Caco-2 (cell line): ENCODE measurements at regions of chr1 and their contacts with region 1.

Region 1: DNA sequence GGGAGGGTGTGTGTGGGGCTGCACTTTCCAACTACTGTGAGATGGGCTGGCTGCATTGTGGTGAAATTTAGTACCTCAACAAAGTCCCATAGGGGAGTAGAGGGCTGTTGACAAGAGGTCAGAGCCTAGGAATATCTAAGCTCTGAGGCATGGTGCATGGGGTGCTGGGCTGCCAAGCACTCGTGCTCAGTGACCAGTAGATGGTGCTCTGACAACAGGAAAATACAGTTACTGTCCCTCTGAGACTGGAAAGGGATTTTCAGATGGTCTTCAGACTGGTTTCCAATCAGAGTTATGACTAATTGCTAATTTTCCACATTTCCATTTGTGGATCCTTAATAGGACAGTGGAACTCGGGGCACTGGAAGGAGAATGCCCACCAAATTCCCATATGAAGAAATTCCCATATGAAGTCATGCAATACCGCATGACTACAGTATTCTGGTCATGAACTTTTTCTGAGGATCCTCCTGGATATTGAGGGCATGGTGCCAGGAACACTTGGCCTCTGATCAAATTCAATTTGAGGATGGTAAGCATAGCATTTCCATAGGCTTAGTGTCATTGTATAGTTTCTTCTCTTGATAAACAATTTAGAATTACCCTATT is 4.1 kb upstream of the CACNA1E start:
- DNase-seq: peak; percentile 52 to 66
- H3K4me3 ChIP-seq: no peak overlapping the region
- H3K4me3 Mint-ChIP-seq: no peak overlapping the region
- H3K27ac Mint-ChIP-seq: no peak overlapping the region
- H3K4me1 ChIP-seq: no peaks in the 10 kb centered on the region
- H3K4me1 Mint-ChIP-seq: peaks cover 7% of the 10 kb centered on the region
- H3K27me3 ChIP-seq: no peaks in the 10 kb centered on the region
- H3K27me3 Mint-ChIP-seq: peaks cover 3% of the 10 kb centered on the region
- CTCF ChIP-seq: peak; percentile 74 to 88

Region 2: GRCh38 chr1:181504399-181504842 is 25.2 kb after region 1 on chr1:
- CTCF ChIA-PET with region 1: interaction called, 16 read pairs
- POLR2A ChIA-PET with region 1: no interaction called
- intact Hi-C with region 1: loop called (anchors 1 kb)
- DNase-seq: peak; percentile 71
- H3K4me3 ChIP-seq: no peak overlapping the region
- H3K4me3 Mint-ChIP-seq: no peak overlapping the region
- H3K27ac Mint-ChIP-seq: no peak overlapping the region
- H3K4me1 ChIP-seq: no peaks in the 10 kb centered on the region
- H3K4me1 Mint-ChIP-seq: no peaks in the 10 kb centered on the region
- H3K27me3 ChIP-seq: no peaks in the 10 kb centered on the region
- H3K27me3 Mint-ChIP-seq: no peaks in the 10 kb centered on the region
- CTCF ChIP-seq: peak; percentile 80 to 84

Region 3: GRCh38 chr1:181531951-181532600 is 52.8 kb after region 1 on chr1:
- CTCF ChIA-PET with region 1: no interaction called
- POLR2A ChIA-PET with region 1: no interaction called
- intact Hi-C with region 1: no loop called
- DNase-seq: no peak
- H3K4me3 ChIP-seq: no peak overlapping the region
- H3K4me3 Mint-ChIP-seq: no peak overlapping the region
- H3K27ac Mint-ChIP-seq: no peak overlapping the region
- H3K4me1 ChIP-seq: no peaks in the 10 kb centered on the region
- H3K4me1 Mint-ChIP-seq: no peaks in the 10 kb centered on the region
- H3K27me3 ChIP-seq: no peaks in the 10 kb centered on the region
- H3K27me3 Mint-ChIP-seq: peaks cover 21% of the 10 kb centered on the region
- CTCF ChIP-seq: no peak

Region 4: GRCh38 chr1:181587870-181588438 is 108.7 kb after region 1 on chr1:
- CTCF ChIA-PET with region 1: no interaction called
- POLR2A ChIA-PET with region 1: no interaction called
- intact Hi-C with region 1: loop called (anchors 5 kb)
- DNase-seq: peak in 1 of 2 experiments; percentile 27
- H3K4me3 ChIP-seq: no peak overlapping the region
- H3K4me3 Mint-ChIP-seq: no peak overlapping the region
- H3K27ac Mint-ChIP-seq: no peak overlapping the region
- H3K4me1 ChIP-seq: no peaks in the 10 kb centered on the region
- H3K4me1 Mint-ChIP-seq: no peaks in the 10 kb centered on the region
- H3K27me3 ChIP-seq: no peaks in the 10 kb centered on the region
- H3K27me3 Mint-ChIP-seq: peaks cover 12% of the 10 kb centered on the region
- CTCF ChIP-seq: peak; percentile 33 to 46

Region 5: DNA sequence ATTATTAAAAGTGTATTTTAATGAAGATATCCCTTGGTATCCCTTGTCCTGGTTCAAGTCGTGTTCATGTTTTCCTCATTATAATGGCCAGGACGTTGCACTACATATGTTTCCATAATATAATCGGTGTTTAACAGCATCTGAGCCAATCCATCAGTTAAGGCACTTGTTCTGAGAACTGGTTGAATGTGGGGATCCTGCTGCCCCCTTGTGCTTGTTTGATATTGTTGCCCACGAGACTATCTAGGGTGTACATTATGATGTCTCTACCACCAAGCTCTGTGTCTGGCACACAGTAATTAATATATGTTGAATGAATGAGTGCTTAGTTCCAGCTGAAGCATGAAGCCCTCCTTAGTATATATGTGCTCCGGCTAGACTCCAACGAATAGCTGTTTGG is 197.0 kb after region 1 on chr1:
- CTCF ChIA-PET with region 1: interaction called, 11 read pairs
- POLR2A ChIA-PET with region 1: no interaction called
- intact Hi-C with region 1: loop called (anchors 1 kb)
- DNase-seq: peak in 1 of 2 experiments; percentile 45
- H3K4me3 ChIP-seq: no peak overlapping the region
- H3K4me3 Mint-ChIP-seq: no peak overlapping the region
- H3K27ac Mint-ChIP-seq: no peak overlapping the region
- H3K4me1 ChIP-seq: no peaks in the 10 kb centered on the region
- H3K4me1 Mint-ChIP-seq: no peaks in the 10 kb centered on the region
- H3K27me3 ChIP-seq: peaks cover 1% of the 10 kb centered on the region; the same call in 1 of the 2 replicates
- H3K27me3 Mint-ChIP-seq: peaks cover 24% of the 10 kb centered on the region
- CTCF ChIP-seq: peak; percentile 32 to 62